Activated naive CD4-positive, alpha-beta T cell treated with anti-CD3 and anti-CD28 coated beads for 36 hours (primary cell): ENCODE measurements at regions of chr9 and their contacts with region 1.

Region 1: GRCh38 chr9:109934857-109935215 is 154.8 kb downstream of the PALM2AKAP2 start:
- DNase-seq: peak; percentile 41
- H3K4me3 Mint-ChIP-seq: no peak overlapping the region
- H3K27ac Mint-ChIP-seq: peak overlapping the region; percentile 73
- H3K4me1 Mint-ChIP-seq: peaks cover 42% of the 10 kb centered on the region
- H3K27me3 Mint-ChIP-seq: no peaks in the 10 kb centered on the region

Region 2: DNA sequence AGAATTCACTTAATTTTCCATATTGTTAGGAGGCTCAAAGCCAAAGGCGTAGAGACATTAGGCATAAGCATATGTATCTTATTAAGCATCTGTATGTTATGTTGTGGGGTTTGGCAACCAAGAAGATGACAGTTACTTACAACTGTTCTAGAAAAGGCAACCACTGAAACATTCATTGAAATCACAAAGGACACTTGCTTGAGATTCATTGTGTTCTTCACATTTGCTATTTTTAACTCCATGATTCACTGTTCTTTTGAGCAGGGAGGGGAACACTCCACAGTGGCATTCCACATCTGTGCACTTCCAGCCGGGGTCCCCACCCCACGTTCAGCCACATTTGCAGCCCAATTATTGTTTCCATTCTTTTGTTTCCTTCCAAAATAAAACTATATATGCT is 47.8 kb before region 1 on chr9:
- CTCF ChIA-PET with region 1: no interaction called
- intact Hi-C with region 1: loop called (anchors 1 kb)
- DNase-seq: no peak
- H3K4me3 Mint-ChIP-seq: no peak overlapping the region
- H3K27ac Mint-ChIP-seq: peak overlapping the region; percentile 96
- H3K4me1 Mint-ChIP-seq: peaks cover 61% of the 10 kb centered on the region
- H3K27me3 Mint-ChIP-seq: no peaks in the 10 kb centered on the region

Region 3: GRCh38 chr9:109894921-109895758 is 39.7 kb before region 1 on chr9:
- CTCF ChIA-PET with region 1: no interaction called
- intact Hi-C with region 1: loop called (anchors 1 kb)
- DNase-seq: peak; percentile 89
- H3K4me3 Mint-ChIP-seq: peak overlapping the region; percentile 45
- H3K27ac Mint-ChIP-seq: peak overlapping the region; percentile 92
- H3K4me1 Mint-ChIP-seq: peaks cover 36% of the 10 kb centered on the region
- H3K27me3 Mint-ChIP-seq: no peaks in the 10 kb centered on the region

Region 4: GRCh38 chr9:109950710-109951443 is 16.0 kb after region 1 on chr9:
- CTCF ChIA-PET with region 1: interaction called, 5 read pairs
- intact Hi-C with region 1: loop called (anchors 1 kb)
- DNase-seq: peak; percentile 58
- H3K4me3 Mint-ChIP-seq: no peak overlapping the region
- H3K27ac Mint-ChIP-seq: peak overlapping the region; percentile 67
- H3K4me1 Mint-ChIP-seq: peaks cover 23% of the 10 kb centered on the region
- H3K27me3 Mint-ChIP-seq: no peaks in the 10 kb centered on the region

Region 5: GRCh38 chr9:110320651-110321445 is 386.0 kb after region 1 on chr9:
- CTCF ChIA-PET with region 1: no interaction called
- intact Hi-C with region 1: no loop called
- DNase-seq: no peak
- H3K4me3 Mint-ChIP-seq: no peak overlapping the region
- H3K27ac Mint-ChIP-seq: no peak overlapping the region
- H3K4me1 Mint-ChIP-seq: peaks cover 8% of the 10 kb centered on the region
- H3K27me3 Mint-ChIP-seq: peaks cover 3% of the 10 kb centered on the region